CD8-positive, alpha-beta T cell (primary cell): ENCODE measurements at regions of chr19 and their contacts with region 1.

Region 1: GRCh38 chr19:29610563-29611271 is 4.6 kb downstream of the POP4 start:
- DNase-seq: peak; percentile 77 to 92 (median 86)
- ATAC-seq: peak; percentile 58
- H3K4me3 ChIP-seq: peak overlapping the region in 1 of 2 experiments; percentile 20
- H3K4me3 Mint-ChIP-seq: no peak overlapping the region
- H3K27ac ChIP-seq: peak overlapping the region in 1 of 2 experiments; percentile 62
- H3K27ac Mint-ChIP-seq: peak overlapping the region; percentile 42
- H3K4me1 ChIP-seq: peaks cover 19% of the 10 kb centered on the region
- H3K4me1 Mint-ChIP-seq: peaks cover 28% of the 10 kb centered on the region
- H3K27me3 ChIP-seq: no peaks in the 10 kb centered on the region
- H3K27me3 Mint-ChIP-seq: no peaks in the 10 kb centered on the region
- CTCF ChIP-seq: peak; percentile 88

Region 2: GRCh38 chr19:29154163-29154562 is 456.6 kb before region 1 on chr19:
- CTCF ChIA-PET with region 1: no interaction called
- POLR2A ChIA-PET with region 1: no interaction called
- intact Hi-C with region 1: no loop called
- DNase-seq: no peak
- ATAC-seq: no peak
- H3K4me3 ChIP-seq: no peak overlapping the region
- H3K4me3 Mint-ChIP-seq: no peak overlapping the region
- H3K27ac ChIP-seq: no peak overlapping the region
- H3K27ac Mint-ChIP-seq: no peak overlapping the region
- H3K4me1 ChIP-seq: no peaks in the 10 kb centered on the region
- H3K4me1 Mint-ChIP-seq: no peaks in the 10 kb centered on the region
- H3K27me3 ChIP-seq: no peaks in the 10 kb centered on the region
- H3K27me3 Mint-ChIP-seq: peaks cover 3% of the 10 kb centered on the region
- CTCF ChIP-seq: no peak

Region 3: DNA sequence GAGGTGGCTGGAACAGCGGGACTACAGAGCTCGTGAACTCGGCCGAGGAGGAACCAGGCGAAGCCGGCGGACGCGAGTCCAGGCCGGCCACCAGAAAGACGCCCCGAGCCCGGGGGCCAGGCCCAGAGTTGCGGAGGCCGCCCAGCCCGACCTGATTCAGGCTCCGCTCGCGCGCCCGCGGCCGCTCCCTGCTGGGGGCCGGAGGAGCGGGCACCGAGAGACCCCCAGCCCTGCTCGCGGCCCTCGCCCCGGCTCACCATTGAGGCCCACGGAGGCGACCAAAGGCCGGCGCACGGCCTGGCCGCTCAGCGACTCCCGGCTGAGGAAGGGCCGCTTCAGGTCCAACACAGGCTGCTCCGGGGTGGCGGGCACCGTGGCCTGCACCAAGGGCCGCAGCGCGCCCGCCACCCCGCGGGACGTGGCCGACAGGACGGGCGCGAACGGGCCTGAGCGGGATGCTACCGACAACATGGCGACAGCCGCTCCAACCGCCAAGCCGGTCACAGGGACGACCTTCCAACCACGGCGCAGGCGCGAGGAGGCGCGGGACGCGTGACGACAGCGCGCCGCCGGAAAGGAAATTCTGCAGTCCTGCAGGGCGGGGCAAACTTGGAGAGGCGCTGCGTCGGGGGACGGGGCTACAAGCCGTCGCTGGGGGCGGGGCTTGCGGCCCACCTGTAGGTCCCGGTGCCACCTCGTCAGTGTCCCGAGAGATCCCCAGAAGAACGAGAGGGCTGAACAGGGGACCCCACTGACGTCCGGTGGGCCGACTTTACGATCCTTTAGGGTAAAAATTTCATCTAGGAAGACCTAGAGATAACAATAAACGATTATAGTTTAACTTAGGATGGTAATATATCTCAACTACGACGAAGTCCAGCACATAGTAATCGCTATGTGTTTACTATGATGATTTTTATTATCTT is 397.8 kb before region 1 on chr19 and contains the start of gene UQCRFS1:
- CTCF ChIA-PET with region 1: no interaction called
- POLR2A ChIA-PET with region 1: no interaction called
- intact Hi-C with region 1: loop called (anchors 2 to 5 kb)
- DNase-seq: peak; percentile 92 to 97 (median 95)
- ATAC-seq: peak; percentile 97
- H3K4me3 ChIP-seq: peak within 1 kb of the TSS; percentile 60 to 77
- H3K4me3 Mint-ChIP-seq: peak within 1 kb of the TSS; percentile 95
- H3K27ac ChIP-seq: peak within 1 kb of the TSS; percentile 80 to 89
- H3K27ac Mint-ChIP-seq: peak within 1 kb of the TSS; percentile 96
- H3K4me1 ChIP-seq: peaks cover 17% of the 10 kb centered on the region
- H3K4me1 Mint-ChIP-seq: peaks cover 46% of the 10 kb centered on the region
- H3K27me3 ChIP-seq: no peaks in the 10 kb centered on the region
- H3K27me3 Mint-ChIP-seq: peaks cover 6% of the 10 kb centered on the region
- CTCF ChIP-seq: no peak
- total RNA-seq, gene UQCRFS1: 31.5 to 31.8 TPM

Region 4: GRCh38 chr19:29380581-29380980 is 230.1 kb before region 1 on chr19:
- CTCF ChIA-PET with region 1: no interaction called
- POLR2A ChIA-PET with region 1: no interaction called
- intact Hi-C with region 1: no loop called
- DNase-seq: no peak
- ATAC-seq: no peak
- H3K4me3 ChIP-seq: no peak overlapping the region
- H3K4me3 Mint-ChIP-seq: no peak overlapping the region
- H3K27ac ChIP-seq: no peak overlapping the region
- H3K27ac Mint-ChIP-seq: no peak overlapping the region
- H3K4me1 ChIP-seq: no peaks in the 10 kb centered on the region
- H3K4me1 Mint-ChIP-seq: no peaks in the 10 kb centered on the region
- H3K27me3 ChIP-seq: no peaks in the 10 kb centered on the region
- H3K27me3 Mint-ChIP-seq: peaks cover 16% of the 10 kb centered on the region
- CTCF ChIP-seq: no peak

Region 5: DNA sequence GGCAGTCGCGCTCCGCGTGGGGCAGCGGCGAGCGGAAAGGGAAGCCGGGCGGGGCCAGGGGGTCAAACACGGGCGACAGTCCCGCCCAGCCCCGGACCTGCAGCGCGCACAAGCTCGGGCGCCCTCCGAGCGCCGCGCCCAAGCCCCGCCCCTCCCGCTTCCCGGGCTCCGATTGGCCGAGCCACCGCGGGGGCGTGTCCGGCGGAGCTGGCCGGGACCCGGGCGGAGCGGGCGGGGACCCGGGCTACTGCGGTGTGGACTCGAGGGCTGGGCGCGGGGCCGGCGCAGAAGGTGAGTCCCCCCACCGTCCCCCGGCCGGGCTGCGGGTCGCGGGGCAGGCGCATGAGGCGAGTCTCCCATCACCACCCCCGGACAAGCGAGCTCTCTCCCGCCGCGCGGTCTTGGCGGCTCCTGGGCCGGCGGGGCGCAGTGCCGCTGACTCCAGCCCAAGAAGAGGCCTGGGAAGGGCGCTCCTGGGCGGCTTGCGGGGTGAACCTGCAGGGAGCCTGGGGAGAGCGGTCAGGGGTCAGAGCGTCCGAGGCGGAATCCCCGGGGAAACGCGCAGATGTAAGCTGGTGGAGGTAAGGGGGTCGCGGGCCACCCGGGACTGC is 54.6 kb after region 1 on chr19 and contains the start of gene PLEKHF1:
- CTCF ChIA-PET with region 1: interaction called, 87 read pairs
- POLR2A ChIA-PET with region 1: interaction called, 51 read pairs
- intact Hi-C with region 1: loop called (anchors 1 to 2 kb)
- DNase-seq: peak; percentile 56 to 89 (median 81)
- ATAC-seq: peak; percentile 69
- H3K4me3 ChIP-seq: peak within 1 kb of the TSS; percentile 91 to 96
- H3K4me3 Mint-ChIP-seq: peak within 1 kb of the TSS; percentile 89
- H3K27ac ChIP-seq: peak within 1 kb of the TSS; percentile 69 to 84
- H3K27ac Mint-ChIP-seq: peak within 1 kb of the TSS; percentile 94
- H3K4me1 ChIP-seq: peaks cover 57% of the 10 kb centered on the region
- H3K4me1 Mint-ChIP-seq: peaks cover 60% of the 10 kb centered on the region
- H3K27me3 ChIP-seq: no peaks in the 10 kb centered on the region
- H3K27me3 Mint-ChIP-seq: no peaks in the 10 kb centered on the region
- CTCF ChIP-seq: no peak
- total RNA-seq, gene PLEKHF1: 33.7 to 34.1 TPM

Region 6: DNA sequence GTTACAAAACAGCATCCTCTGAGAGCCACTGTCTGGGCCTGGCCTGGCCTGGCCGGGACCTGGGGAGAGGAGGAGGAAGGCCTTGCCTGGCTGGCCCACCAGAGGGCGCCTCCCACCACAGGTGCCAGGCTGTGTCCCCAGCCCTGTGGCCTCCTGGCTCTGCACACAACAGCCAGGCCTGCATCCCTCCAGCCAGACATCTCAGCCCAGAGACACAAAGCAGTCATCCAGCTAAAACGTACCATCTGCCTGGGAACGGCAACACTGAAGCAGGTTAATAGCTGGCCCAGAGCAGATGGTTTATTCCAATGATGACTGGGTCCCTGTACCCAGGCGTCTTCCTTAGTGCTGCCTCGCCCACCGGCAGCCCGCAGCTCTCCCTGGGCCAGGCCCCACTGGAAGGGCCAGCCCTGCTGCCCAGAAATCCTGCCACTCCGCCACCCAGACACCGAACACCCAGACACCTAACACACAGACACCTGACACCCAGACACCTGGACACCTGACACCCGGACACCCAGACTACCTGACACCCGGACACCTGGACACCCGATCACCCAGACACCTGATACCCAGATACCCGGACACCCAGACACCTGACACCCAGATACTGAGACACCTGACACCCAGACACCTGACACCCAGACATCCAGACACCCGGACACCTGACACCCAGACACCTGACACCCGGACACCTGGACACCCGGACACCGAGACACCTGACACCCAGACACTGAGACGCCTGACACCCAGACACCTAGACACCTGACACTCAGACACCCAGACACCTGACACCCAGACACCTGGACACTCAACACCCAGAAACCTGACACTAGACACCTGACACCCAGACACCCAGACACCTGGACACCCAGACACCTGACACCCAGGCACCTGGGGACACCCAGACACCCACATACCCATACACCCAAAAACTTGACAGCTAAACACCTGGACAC is 84.2 kb after region 1 on chr19:
- CTCF ChIA-PET with region 1: interaction called, 387 read pairs
- POLR2A ChIA-PET with region 1: interaction called, 9 read pairs
- intact Hi-C with region 1: loop called (anchors 1 kb)
- DNase-seq: peak; percentile 71 to 91 (median 83)
- ATAC-seq: peak; percentile 93
- H3K4me3 ChIP-seq: no peak overlapping the region
- H3K4me3 Mint-ChIP-seq: no peak overlapping the region
- H3K27ac ChIP-seq: no peak overlapping the region
- H3K27ac Mint-ChIP-seq: peak overlapping the region; percentile 39
- H3K4me1 ChIP-seq: peaks cover 26% of the 10 kb centered on the region
- H3K4me1 Mint-ChIP-seq: peaks cover 17% of the 10 kb centered on the region
- H3K27me3 ChIP-seq: no peaks in the 10 kb centered on the region
- H3K27me3 Mint-ChIP-seq: no peaks in the 10 kb centered on the region
- CTCF ChIP-seq: peak; percentile 97

Region 7: DNA sequence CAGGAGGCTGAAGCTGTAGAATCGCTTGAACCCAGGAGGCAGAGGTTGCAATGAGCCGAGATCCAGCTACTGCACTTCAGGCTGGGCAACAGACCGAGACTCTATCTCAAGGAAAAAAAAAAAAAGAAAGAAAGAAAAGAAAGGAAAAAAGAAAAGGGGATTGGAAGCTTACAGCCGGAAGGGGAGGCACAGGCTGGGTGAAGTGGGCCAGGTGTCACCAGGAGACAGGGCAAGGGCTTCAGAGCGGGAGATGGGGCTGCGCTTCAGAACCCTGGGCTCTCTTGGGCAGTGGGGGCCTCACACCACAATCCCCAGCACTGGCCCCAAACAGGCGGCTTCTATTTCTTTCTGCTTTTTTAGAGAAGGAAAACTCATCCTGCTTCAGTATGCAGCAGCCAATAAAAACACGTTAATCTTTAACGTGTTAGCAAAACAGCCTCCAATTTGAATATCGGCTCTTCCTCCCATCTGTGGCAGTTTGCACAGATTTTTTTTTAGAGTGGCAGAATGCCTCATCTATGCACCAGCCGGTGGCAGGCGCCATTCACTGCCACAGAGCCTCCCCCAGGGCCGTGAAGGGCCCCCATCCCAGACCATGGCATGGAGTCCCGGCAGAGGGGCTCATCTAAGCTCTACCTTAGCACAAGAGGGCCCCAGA is 151.0 kb after region 1 on chr19:
- CTCF ChIA-PET with region 1: no interaction called
- POLR2A ChIA-PET with region 1: no interaction called
- intact Hi-C with region 1: no loop called
- DNase-seq: no peak
- ATAC-seq: no peak
- H3K4me3 ChIP-seq: no peak overlapping the region
- H3K4me3 Mint-ChIP-seq: no peak overlapping the region
- H3K27ac ChIP-seq: no peak overlapping the region
- H3K27ac Mint-ChIP-seq: no peak overlapping the region
- H3K4me1 ChIP-seq: no peaks in the 10 kb centered on the region
- H3K4me1 Mint-ChIP-seq: peaks cover 2% of the 10 kb centered on the region
- H3K27me3 ChIP-seq: no peaks in the 10 kb centered on the region
- H3K27me3 Mint-ChIP-seq: peaks cover 1% of the 10 kb centered on the region
- CTCF ChIP-seq: no peak

Region 8: GRCh38 chr19:29811125-29812079 is 200.7 kb after region 1 on chr19 and contains the start of gene CCNE1:
- CTCF ChIA-PET with region 1: no interaction called
- POLR2A ChIA-PET with region 1: no interaction called
- intact Hi-C with region 1: loop called in 1 of 2 experiments (anchors 5 kb)
- DNase-seq: peak; percentile 84 to 98 (median 94)
- ATAC-seq: peak; percentile 95
- H3K4me3 ChIP-seq: peak within 1 kb of the TSS; percentile 54 to 58
- H3K4me3 Mint-ChIP-seq: peak within 1 kb of the TSS; percentile 93
- H3K27ac ChIP-seq: peak within 1 kb of the TSS; percentile 58 to 59
- H3K27ac Mint-ChIP-seq: peak within 1 kb of the TSS; percentile 75
- H3K4me1 ChIP-seq: peaks cover 5% of the 10 kb centered on the region
- H3K4me1 Mint-ChIP-seq: peaks cover 13% of the 10 kb centered on the region
- H3K27me3 ChIP-seq: no peaks in the 10 kb centered on the region
- H3K27me3 Mint-ChIP-seq: no peaks in the 10 kb centered on the region
- CTCF ChIP-seq: no peak
- total RNA-seq, gene CCNE1: 4.9 to 6.6 TPM

Region 9: DNA sequence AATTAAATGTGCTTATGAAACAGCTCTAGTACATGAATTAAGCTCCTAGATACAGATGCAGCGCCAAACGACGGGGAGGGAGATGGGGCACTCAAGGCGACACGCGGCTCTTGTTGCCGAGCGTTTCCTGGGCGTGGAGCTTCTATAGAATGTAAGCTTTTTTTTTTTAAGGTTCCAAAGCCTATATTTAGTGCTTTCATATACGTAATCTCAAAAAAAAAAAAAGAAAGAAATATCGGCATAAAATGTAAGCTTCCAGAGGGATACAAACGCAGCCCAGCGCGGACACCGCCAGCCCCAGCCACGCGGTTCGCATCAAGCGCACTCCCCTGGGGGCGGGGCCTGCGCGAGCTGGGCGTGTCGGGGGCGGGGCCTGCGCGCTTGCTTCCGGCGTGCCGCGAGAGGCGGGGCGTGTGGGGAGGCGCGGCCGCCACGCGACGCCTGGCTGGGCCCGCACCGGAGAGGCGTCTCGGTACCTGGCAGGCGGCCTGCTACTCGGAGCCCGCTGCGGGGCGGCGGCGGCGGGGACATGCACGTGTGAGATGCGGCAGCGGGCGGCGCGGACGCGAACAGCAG is 331.2 kb after region 1 on chr19 and contains the start of gene URI1:
- CTCF ChIA-PET with region 1: no interaction called
- POLR2A ChIA-PET with region 1: interaction called, 8 read pairs
- intact Hi-C with region 1: loop called (anchors 1 to 2 kb)
- DNase-seq: peak; percentile 87 to 98 (median 92)
- ATAC-seq: peak; percentile 92
- H3K4me3 ChIP-seq: peak within 1 kb of the TSS; percentile 81 to 85
- H3K4me3 Mint-ChIP-seq: peak within 1 kb of the TSS; percentile 97
- H3K27ac ChIP-seq: peak within 1 kb of the TSS; percentile 59 to 64
- H3K27ac Mint-ChIP-seq: peak within 1 kb of the TSS; percentile 94
- H3K4me1 ChIP-seq: peaks cover 40% of the 10 kb centered on the region
- H3K4me1 Mint-ChIP-seq: peaks cover 47% of the 10 kb centered on the region
- H3K27me3 ChIP-seq: peaks cover 0 to 2% of the 10 kb centered on the region in 2 experiments
- H3K27me3 Mint-ChIP-seq: peaks cover 3% of the 10 kb centered on the region
- CTCF ChIP-seq: no peak
- total RNA-seq, gene URI1: 51.3 to 56.4 TPM